ENCODE measurements at regions of chr1 and their contacts with region 1.

Region 1: DNA sequence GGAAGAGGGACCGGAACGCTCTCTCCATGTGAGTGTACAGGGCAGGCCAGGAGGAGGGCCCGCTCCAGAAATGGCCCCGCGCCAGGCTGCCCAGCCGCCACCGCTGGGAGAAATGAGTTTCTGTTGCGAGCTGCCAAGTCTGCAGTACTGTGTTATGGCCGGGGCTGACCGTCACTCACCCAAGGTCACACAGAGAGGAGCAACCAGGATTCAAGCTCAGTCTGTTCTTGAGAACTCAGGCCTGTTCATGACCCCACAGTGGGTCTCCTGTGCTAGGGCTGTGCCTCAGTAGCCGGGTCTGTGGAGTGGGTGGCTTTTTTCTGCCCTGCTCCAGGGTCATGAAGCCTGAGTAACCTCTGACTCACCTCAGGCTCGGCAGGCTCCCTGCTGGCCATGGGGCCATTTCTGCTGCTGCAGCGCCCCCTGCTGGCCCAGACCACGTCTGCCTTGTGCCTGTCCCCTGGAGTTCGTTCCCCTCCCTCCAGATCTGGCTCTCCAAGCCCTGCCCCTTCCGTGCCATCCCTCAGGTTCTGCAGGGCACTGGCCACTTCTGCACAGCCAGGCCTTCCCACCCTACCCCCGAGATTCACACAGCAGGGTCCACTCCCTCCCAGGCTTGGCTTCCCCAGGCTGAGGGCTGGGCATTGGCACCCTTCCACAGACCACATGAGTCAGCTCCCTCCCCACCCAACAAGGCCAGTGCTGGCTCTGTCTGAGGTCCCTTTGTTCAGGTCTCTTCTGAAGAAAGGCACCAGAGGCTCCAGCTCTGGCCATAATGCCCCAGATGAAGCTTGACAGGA is 51.8 kb downstream of the EDN2 start:
- DNase-seq: peak; percentile 83 to 99
- H3K4me3 ChIP-seq: no peak overlapping the region
- H3K27ac ChIP-seq: no peak overlapping the region
- H3K4me1 ChIP-seq: peaks cover 0 to 10% (median 5%) of the 10 kb centered on the region in 4 experiments; a peak in 5 of 7 replicates
- H3K27me3 ChIP-seq: no peaks in the 10 kb centered on the region
- CTCF ChIP-seq: peak; percentile 96 to 99 (median 99)
- EP300 ChIP-seq: no peak
- POLR2A ChIP-seq: no peak
- RAD21 ChIP-seq: peak; percentile 97 to 99

Region 2: DNA sequence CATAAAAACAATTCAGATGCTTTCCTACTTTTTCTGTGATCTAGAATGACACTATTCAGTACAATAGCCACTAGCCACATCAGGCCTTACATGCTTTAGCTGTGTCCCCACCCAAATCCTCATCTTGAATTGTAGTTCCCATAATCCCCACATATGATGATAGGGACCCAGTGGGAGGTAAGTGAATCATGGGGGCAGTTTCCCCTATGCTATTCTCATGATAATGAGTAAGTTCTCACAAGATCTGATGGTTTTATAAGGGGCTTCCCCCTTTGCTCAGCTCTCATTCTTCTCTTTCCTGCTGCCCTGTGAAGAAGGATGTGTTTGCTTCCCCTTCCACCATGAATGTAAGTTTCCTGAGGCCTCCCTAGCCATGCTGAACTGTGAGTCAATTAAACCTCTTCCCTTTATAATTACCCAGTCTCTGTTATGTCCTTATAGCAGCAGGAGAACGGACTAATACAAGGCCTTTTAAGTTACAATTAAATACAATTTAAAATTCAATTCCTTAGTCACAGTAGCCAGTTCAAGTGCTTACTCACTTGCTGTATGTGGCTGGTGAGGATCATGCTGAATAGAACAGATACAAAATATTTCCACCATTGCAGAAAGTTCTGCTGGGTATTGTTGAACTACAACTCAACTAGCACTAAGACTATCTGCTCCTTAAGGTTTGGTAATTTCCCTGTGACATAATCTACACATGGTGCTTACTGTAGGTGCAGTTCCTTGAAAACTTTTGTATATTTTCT is 297.3 kb before region 1 on chr1:
- CTCF ChIA-PET with region 1: no interaction called
- POLR2A ChIA-PET with region 1: no interaction called
- DNase-seq: no peak
- H3K4me3 ChIP-seq: no peak overlapping the region
- H3K27ac ChIP-seq: no peak overlapping the region
- H3K4me1 ChIP-seq: no peaks in the 10 kb centered on the region
- H3K27me3 ChIP-seq: no peaks in the 10 kb centered on the region
- CTCF ChIP-seq: no peak
- EP300 ChIP-seq: no peak
- POLR2A ChIP-seq: no peak
- RAD21 ChIP-seq: no peak

Region 3: GRCh38 chr1:41282679-41283317 is 149.9 kb before region 1 on chr1:
- CTCF ChIA-PET with region 1: interaction called, 75 read pairs
- POLR2A ChIA-PET with region 1: no interaction called
- DNase-seq: peak; percentile 23 to 81
- H3K4me3 ChIP-seq: no peak overlapping the region
- H3K27ac ChIP-seq: no peak overlapping the region
- H3K4me1 ChIP-seq: peaks cover 8 to 15% (median 13%) of the 10 kb centered on the region in 4 experiments
- H3K27me3 ChIP-seq: no peaks in the 10 kb centered on the region; a peak in 2 of 7 replicates
- CTCF ChIP-seq: peak; percentile 78 to 94 (median 88)
- EP300 ChIP-seq: no peak
- POLR2A ChIP-seq: no peak
- RAD21 ChIP-seq: peak; percentile 83 to 84

Region 4: GRCh38 chr1:41322835-41323627 is 109.7 kb before region 1 on chr1:
- CTCF ChIA-PET with region 1: interaction called, 420 read pairs
- POLR2A ChIA-PET with region 1: interaction called, 3 read pairs
- DNase-seq: peak; percentile 36 to 80
- H3K4me3 ChIP-seq: no peak overlapping the region
- H3K27ac ChIP-seq: no peak overlapping the region
- H3K4me1 ChIP-seq: peaks cover 0 to 10% (median 6%) of the 10 kb centered on the region in 4 experiments; a peak in 6 of 7 replicates
- H3K27me3 ChIP-seq: no peaks in the 10 kb centered on the region; a peak in 1 of 7 replicates
- CTCF ChIP-seq: peak; percentile 87 to 93 (median 89)
- EP300 ChIP-seq: no peak
- POLR2A ChIP-seq: no peak
- RAD21 ChIP-seq: peak; percentile 94 to 96

Region 5: DNA sequence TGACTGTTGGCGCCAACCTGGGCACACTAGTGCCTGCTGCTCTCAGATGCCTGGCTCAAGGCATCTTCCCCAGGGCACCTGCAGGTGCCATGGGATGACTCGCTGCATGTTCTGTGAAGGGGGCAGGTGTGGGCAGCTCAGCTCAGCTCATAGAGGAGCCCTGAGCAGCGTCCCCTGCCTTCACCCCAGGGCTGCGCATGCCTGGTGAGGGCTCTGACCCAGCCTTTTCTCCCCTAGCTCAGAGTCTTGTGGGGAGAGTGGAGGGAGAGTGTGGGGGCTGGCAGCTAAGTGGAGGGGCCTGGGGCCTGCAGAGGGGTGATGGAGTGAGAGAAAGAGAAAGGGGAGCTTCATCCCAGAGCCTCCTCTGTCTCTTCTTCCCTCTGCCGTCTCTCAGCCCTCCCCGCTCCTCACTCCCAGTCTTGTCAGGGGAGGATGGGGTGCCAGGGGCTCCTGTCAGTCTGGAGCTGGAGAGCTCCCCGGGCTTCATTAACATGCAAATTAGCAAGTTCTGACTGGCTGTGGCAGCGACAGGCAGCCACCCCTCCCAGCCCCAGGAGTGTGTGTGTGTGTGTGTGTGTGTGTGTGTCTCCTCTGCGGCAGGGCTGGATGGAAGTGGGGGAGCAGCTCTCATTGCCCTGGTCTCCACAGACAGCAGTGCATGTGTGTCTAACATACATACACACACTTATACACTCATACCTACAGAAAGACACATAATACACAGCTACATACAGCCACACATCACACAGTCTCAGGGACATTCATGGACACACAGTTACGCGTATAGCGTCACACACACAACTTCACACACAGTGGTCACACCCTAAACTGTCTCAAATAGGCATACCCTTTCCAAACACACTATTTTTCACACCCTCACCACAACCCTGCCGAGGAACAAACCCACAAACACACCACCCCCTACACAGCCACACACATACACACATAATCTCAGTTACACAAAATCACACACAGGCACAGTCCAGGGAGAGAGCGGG is 37.4 kb before region 1 on chr1:
- CTCF ChIA-PET with region 1: interaction called, 22 read pairs
- POLR2A ChIA-PET with region 1: no interaction called
- DNase-seq: peak; percentile 75 to 81
- H3K4me3 ChIP-seq: peak overlapping the region in 3 of 4 experiments; percentile 20 to 49 (median 37); a peak in 5 of 8 replicates
- H3K27ac ChIP-seq: no peak overlapping the region
- H3K4me1 ChIP-seq: peaks cover 6 to 46% (median 33%) of the 10 kb centered on the region in 4 experiments
- H3K27me3 ChIP-seq: peaks cover 0 to 5% (median 4%) of the 10 kb centered on the region in 4 experiments; a peak in 4 of 7 replicates
- CTCF ChIP-seq: peak; percentile 26 to 49 (median 36); a peak in 3 of 4 replicates
- EP300 ChIP-seq: no peak
- POLR2A ChIP-seq: no peak
- RAD21 ChIP-seq: peak in 1 of 2 experiments; percentile 14; a peak in 1 of 4 replicates

Region 6: DNA sequence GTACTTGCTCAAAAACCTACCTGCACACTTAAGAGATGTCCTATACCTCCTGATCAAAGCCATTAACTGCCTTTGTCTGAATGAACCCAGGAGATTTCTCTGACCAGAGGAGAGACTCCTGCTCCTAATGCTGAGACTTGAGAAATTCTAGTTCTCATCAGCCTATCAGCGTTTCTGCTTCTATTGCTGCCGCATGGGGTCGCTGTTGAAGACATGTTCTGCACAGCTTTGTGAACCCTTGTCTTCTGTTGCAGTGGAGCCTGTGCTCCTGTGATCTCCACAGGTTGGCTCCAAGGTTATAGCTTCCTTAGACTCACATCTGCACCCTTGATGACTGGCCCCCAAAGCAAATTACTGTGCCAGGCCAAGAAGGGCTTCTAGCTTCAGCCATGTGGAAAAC is 11.6 kb after region 1 on chr1:
- CTCF ChIA-PET with region 1: interaction called, 52 read pairs
- POLR2A ChIA-PET with region 1: interaction called, 6 read pairs
- DNase-seq: no peak
- H3K4me3 ChIP-seq: no peak overlapping the region
- H3K27ac ChIP-seq: no peak overlapping the region
- H3K4me1 ChIP-seq: no peaks in the 10 kb centered on the region; a peak in 2 of 7 replicates
- H3K27me3 ChIP-seq: no peaks in the 10 kb centered on the region
- CTCF ChIP-seq: peak; percentile 26 to 63 (median 48)
- EP300 ChIP-seq: no peak
- POLR2A ChIP-seq: no peak
- RAD21 ChIP-seq: peak in 1 of 2 experiments; percentile 44; a peak in 2 of 4 replicates

Region 7: GRCh38 chr1:41496080-41497055 is 63.7 kb after region 1 on chr1:
- CTCF ChIA-PET with region 1: interaction called, 34 read pairs
- POLR2A ChIA-PET with region 1: no interaction called
- DNase-seq: peak; percentile 69 to 88
- H3K4me3 ChIP-seq: peak overlapping the region; percentile 6 to 51 (median 24); a peak in 6 of 8 replicates
- H3K27ac ChIP-seq: peak overlapping the region; percentile 75; the same call in 1 of the 2 replicates
- H3K4me1 ChIP-seq: peaks cover 0 to 23% (median 17%) of the 10 kb centered on the region in 4 experiments; a peak in 6 of 7 replicates
- H3K27me3 ChIP-seq: peaks cover 0 to 13% (median 11%) of the 10 kb centered on the region in 4 experiments; a peak in 3 of 7 replicates
- CTCF ChIP-seq: 0 out of 4 replicates have a peak, but pooled peaks of 1 of the 3 experiments have one; percentile 5
- EP300 ChIP-seq: peak in 1 of 2 experiments; percentile 71; a peak in 1 of 3 replicates
- POLR2A ChIP-seq: no peak; a peak in 1 of 3 replicates
- RAD21 ChIP-seq: no peak

Region 8: DNA sequence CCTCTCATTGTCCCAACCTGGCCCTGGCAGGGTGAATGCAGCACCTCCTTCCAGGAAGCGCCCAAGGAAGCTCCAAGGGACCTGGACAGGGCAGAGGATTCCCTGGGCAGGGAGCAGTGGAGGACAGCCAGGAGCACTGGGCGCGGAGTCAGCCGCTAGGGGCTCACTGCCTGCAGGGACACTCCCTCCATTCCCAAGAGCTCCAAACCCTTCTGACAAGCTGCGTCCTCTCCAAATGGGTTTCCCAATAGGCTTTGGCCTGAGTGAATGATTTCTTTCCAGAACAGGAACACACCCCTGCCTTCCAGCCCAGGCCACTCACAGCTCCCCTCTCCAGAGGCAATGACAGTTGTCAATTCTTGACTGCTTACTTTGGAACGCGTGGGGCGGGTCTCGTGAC is 180.3 kb after region 1 on chr1:
- CTCF ChIA-PET with region 1: no interaction called
- POLR2A ChIA-PET with region 1: no interaction called
- DNase-seq: peak in 1 of 2 experiments; percentile 17
- H3K4me3 ChIP-seq: no peak overlapping the region
- H3K27ac ChIP-seq: no peak overlapping the region
- H3K4me1 ChIP-seq: no peaks in the 10 kb centered on the region; a peak in 1 of 7 replicates
- H3K27me3 ChIP-seq: no peaks in the 10 kb centered on the region; a peak in 1 of 7 replicates
- CTCF ChIP-seq: no peak
- EP300 ChIP-seq: no peak
- POLR2A ChIP-seq: no peak
- RAD21 ChIP-seq: no peak

Region 9: GRCh38 chr1:41622859-41623723 is 190.4 kb after region 1 on chr1:
- CTCF ChIA-PET with region 1: no interaction called
- POLR2A ChIA-PET with region 1: no interaction called
- DNase-seq: peak in 1 of 2 experiments; percentile 34
- H3K4me3 ChIP-seq: no peak overlapping the region
- H3K27ac ChIP-seq: no peak overlapping the region
- H3K4me1 ChIP-seq: peaks cover 2 to 11% (median 6%) of the 10 kb centered on the region in 4 experiments; a peak in 5 of 7 replicates
- H3K27me3 ChIP-seq: no peaks in the 10 kb centered on the region; a peak in 2 of 7 replicates
- CTCF ChIP-seq: no peak
- EP300 ChIP-seq: no peak
- POLR2A ChIP-seq: no peak
- RAD21 ChIP-seq: no peak